ENCODE measurements at regions of chr3 and their contacts with region 1.

Region 1: DNA sequence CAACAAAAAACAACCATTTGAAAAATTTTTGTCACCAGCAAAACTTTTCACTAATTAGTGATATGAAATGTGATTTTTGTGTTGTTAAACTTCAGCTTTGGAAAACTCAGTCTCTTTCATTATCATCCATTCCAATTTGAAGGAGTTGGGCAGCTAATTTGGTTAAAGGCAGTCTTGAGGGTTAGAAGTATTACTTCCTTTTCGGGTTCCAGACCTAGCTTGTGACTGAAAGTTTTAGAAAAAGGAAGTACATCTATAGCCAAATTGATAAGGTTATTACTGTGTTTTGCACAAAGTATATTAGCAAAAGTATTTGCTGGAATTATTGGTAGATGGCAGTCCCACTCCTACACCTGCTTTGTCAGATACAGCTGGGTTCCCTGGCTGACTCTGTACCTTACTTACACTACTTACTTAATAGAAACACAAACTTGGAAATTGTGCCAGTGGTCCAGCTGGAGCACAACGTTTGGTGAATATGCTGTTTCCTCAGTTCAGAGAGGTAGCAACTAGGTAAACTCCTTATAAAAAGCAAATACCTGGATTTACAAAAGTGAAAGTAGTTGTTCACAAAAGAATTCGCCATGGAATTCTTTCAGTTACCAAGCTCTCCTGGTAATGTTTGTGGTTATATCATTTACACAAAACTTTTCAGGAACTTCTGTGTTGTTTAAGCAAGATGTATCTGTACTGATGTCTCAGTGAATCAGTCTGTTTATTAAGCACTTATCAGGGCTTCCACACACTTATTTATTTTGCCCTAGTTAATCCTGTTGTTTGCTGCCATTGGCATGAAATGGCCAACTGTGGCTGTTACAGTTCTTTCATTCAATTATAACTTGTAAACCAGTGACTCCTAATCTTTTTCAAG is 31.6 kb downstream of the TIPARP start:
- DNase-seq: peak; percentile 44
- ATAC-seq: peak; percentile 64
- H3K4me3 ChIP-seq: no peak overlapping the region
- H3K27ac ChIP-seq: no peak overlapping the region
- H3K4me1 ChIP-seq: peaks cover 6% of the 10 kb centered on the region
- H3K27me3 ChIP-seq: no peaks in the 10 kb centered on the region
- CTCF ChIP-seq: no peak
- POLR2A ChIP-seq: no peak
- RAD21 ChIP-seq: no peak

Region 2: GRCh38 chr3:156547637-156548036 is 158.4 kb before region 1 on chr3:
- CTCF ChIA-PET with region 1: no interaction called
- POLR2A ChIA-PET with region 1: interaction called, 22 read pairs
- dilution Hi-C with region 1: no loop called
- in situ Hi-C with region 1: no loop called
- intact Hi-C with region 1: no loop called
- DNase-seq: peak; percentile 56
- ATAC-seq: no peak
- H3K4me3 ChIP-seq: no peak overlapping the region
- H3K27ac ChIP-seq: peak overlapping the region; percentile 49; the same call in 1 of the 2 replicates
- H3K4me1 ChIP-seq: peaks cover 14% of the 10 kb centered on the region
- H3K27me3 ChIP-seq: no peaks in the 10 kb centered on the region
- CTCF ChIP-seq: no peak
- POLR2A ChIP-seq: no peak
- RAD21 ChIP-seq: no peak

Region 3: DNA sequence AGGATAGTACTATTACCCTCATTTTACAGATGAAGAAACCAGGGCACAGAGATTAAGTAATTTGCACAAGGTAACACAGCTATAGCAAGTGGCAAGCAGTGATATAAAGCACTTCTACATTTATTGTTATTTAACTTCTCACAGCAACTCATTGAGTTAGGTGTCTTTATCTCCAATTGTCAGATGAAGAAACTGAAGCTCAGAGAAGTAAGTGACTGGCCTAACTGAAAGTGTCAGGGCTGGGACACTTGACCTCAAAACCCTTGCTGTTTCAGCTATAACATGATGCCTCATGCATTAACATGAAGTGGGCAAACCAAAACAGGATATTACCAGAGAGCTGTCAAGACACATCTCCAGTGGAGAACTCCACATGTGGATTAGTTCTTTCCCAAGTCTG is 54.3 kb after region 1 on chr3:
- CTCF ChIA-PET with region 1: no interaction called
- POLR2A ChIA-PET with region 1: no interaction called
- dilution Hi-C with region 1: no loop called
- in situ Hi-C with region 1: no loop called
- intact Hi-C with region 1: no loop called
- DNase-seq: no peak
- ATAC-seq: no peak
- H3K4me3 ChIP-seq: no peak overlapping the region
- H3K27ac ChIP-seq: no peak overlapping the region
- H3K4me1 ChIP-seq: peaks cover 6% of the 10 kb centered on the region
- H3K27me3 ChIP-seq: no peaks in the 10 kb centered on the region
- CTCF ChIP-seq: no peak
- POLR2A ChIP-seq: no peak
- RAD21 ChIP-seq: no peak

Region 4: DNA sequence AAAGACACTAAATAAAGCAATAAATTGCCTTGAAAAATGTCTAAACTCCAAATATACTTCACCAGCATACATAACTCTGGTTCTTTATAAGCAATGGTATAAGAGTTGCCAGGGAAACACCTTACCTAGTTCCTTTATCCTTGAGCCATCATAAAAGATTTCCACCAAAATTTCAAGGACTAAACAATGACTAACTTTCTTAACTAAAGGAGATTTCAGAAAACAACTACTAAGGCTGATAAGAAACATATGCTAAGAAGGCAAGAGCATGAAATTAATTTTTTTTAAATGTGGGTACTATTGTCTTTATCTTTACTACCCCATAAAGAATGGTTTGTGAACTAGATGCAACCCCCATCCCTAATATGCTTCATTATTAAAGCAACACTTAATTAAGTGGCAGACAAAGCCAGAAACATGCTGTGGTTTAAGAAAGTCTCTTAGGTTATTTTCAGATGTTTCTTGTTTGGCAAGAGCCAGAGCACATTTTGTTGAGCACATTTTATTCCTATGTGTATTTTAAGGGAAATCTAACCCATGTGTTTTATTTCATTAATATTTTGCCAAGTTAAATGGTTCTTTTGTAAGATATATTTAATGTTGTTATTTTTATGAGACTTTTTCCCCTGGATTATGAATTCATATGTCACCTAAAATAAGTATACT is 814.6 kb after region 1 on chr3:
- CTCF ChIA-PET with region 1: no interaction called
- POLR2A ChIA-PET with region 1: no interaction called
- dilution Hi-C with region 1: no loop called
- in situ Hi-C with region 1: no loop called
- intact Hi-C with region 1: loop called (anchors 5 kb)
- DNase-seq: no peak
- ATAC-seq: no peak
- H3K4me3 ChIP-seq: no peak overlapping the region
- H3K27ac ChIP-seq: no peak overlapping the region
- H3K4me1 ChIP-seq: peaks cover 1% of the 10 kb centered on the region; the same call in 1 of the 2 replicates
- H3K27me3 ChIP-seq: no peaks in the 10 kb centered on the region
- CTCF ChIP-seq: no peak
- POLR2A ChIP-seq: no peak
- RAD21 ChIP-seq: no peak